ENCODE measurements at regions of chr20 and their contacts with region 1.

Region 1: GRCh38 chr20:51306503-51307358 is 235.8 kb downstream of the NFATC2 start:
- DNase-seq: peak; percentile 65 to 87 (median 82)
- ATAC-seq: peak; percentile 93
- H3K4me3 ChIP-seq: no peak overlapping the region
- H3K4me1 ChIP-seq: peaks cover 4% of the 10 kb centered on the region
- CTCF ChIP-seq: peak; percentile 82

Region 2: GRCh38 chr20:50987592-50988210 is 319.0 kb before region 1 on chr20:
- intact Hi-C with region 1: loop called (anchors 5 kb)
- DNase-seq: peak in 2 of 3 donors; percentile 39 to 88
- ATAC-seq: peak; percentile 95
- H3K4me3 ChIP-seq: no peak overlapping the region
- H3K4me1 ChIP-seq: peaks cover 3% of the 10 kb centered on the region
- CTCF ChIP-seq: peak; percentile 73

Region 3: GRCh38 chr20:50996901-50997865 is 309.5 kb before region 1 on chr20:
- intact Hi-C with region 1: loop called in 1 of 2 experiments (anchors 5 kb)
- DNase-seq: no peak
- ATAC-seq: no peak
- H3K4me3 ChIP-seq: no peak overlapping the region
- H3K4me1 ChIP-seq: no peaks in the 10 kb centered on the region
- CTCF ChIP-seq: no peak